ENCODE measurements at regions of chr10 and their contacts with region 1.

Region 1: GRCh38 chr10:80699602-80700039 is 161.9 kb downstream of the SH2D4B start:
- DNase-seq: peak; percentile 39
- ATAC-seq: peak; percentile 94
- H3K4me3 ChIP-seq: no peak overlapping the region
- H3K27ac ChIP-seq: no peak overlapping the region
- H3K4me1 ChIP-seq: no peaks in the 10 kb centered on the region
- H3K27me3 ChIP-seq: peaks cover 3% of the 10 kb centered on the region; the same call in 1 of the 2 replicates
- CTCF ChIP-seq: peak; percentile 96

Region 2: GRCh38 chr10:80589726-80590373 is 109.8 kb before region 1 on chr10:
- CTCF ChIA-PET with region 1: no interaction called
- POLR2A ChIA-PET with region 1: no interaction called
- in situ Hi-C with region 1: no loop called
- intact Hi-C with region 1: no loop called
- DNase-seq: no peak
- ATAC-seq: no peak
- H3K4me3 ChIP-seq: no peak overlapping the region
- H3K27ac ChIP-seq: no peak overlapping the region
- H3K4me1 ChIP-seq: no peaks in the 10 kb centered on the region
- H3K27me3 ChIP-seq: no peaks in the 10 kb centered on the region; the same call in 1 of the 2 replicates
- CTCF ChIP-seq: no peak

Region 3: DNA sequence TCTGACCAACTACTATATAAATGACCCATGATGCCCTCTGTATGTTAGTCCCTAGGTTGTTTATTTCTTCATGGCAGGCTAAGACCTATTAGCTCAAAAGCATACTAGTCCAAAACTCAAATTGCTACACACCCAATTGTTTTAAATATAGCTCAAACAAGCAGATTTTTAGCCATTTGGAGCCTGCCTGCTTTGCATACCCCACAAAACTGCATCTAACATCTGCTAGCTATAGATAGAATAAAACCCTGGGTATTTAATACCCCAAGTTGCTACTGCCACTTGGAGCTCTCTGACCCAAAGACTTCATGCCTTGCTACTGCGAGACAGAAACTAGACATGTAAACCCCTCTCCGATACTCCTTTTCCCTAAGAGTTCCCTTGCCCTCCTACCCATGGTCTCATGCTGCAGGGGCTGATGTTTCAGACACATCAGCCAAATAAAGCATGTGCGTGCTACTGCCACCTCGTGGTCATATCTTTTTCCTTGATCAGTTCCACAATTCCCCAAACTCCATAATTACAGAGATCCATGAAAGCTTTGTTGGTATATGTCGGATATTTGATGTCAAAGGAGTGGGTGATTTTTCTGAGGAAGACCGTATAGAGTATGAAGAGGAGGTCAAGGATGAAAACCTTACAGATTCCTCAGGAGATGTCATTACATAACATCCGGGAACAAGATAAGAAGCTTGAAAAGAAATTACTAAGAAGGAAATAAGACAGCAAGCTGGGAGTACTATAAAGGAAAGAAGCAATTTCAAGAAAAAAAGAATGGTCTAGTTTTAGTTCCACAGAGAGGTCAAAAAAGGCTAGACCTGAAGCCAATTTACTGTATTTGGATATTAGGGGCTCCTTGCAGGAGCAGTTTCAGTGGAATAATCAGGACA is 224.7 kb after region 1 on chr10:
- CTCF ChIA-PET with region 1: interaction called, 10 read pairs
- POLR2A ChIA-PET with region 1: no interaction called
- in situ Hi-C with region 1: no loop called
- intact Hi-C with region 1: loop called (anchors 1 kb)
- DNase-seq: no peak
- ATAC-seq: peak; percentile 76
- H3K4me3 ChIP-seq: no peak overlapping the region
- H3K27ac ChIP-seq: no peak overlapping the region
- H3K4me1 ChIP-seq: no peaks in the 10 kb centered on the region
- H3K27me3 ChIP-seq: no peaks in the 10 kb centered on the region
- CTCF ChIP-seq: peak; percentile 83

Region 4: GRCh38 chr10:81018708-81019365 is 319.2 kb after region 1 on chr10:
- CTCF ChIA-PET with region 1: no interaction called
- POLR2A ChIA-PET with region 1: no interaction called
- in situ Hi-C with region 1: no loop called
- intact Hi-C with region 1: loop called (anchors 2 kb)
- DNase-seq: peak; percentile 25
- ATAC-seq: peak; percentile 86
- H3K4me3 ChIP-seq: no peak overlapping the region
- H3K27ac ChIP-seq: no peak overlapping the region
- H3K4me1 ChIP-seq: no peaks in the 10 kb centered on the region
- H3K27me3 ChIP-seq: no peaks in the 10 kb centered on the region
- CTCF ChIP-seq: peak; percentile 87

Region 5: DNA sequence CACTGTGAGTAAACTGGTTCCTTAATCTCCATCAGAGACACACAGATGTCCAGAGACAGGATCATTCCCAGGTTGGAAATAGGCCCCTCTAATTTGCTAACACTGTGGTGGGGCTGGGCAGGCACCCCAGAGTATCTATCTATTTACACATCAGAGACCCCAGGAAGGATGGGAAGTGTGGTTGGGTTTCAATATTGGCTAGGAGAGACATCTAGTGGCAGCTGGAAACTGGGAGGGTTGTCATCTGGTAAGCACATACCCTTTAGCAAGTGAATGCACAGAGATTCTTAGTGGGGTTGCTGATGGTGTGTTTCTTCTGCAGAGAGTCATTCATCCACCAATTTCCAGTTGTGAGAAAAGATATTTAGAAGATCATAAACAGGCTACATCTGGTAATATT is 1139.3 kb after region 1 on chr10:
- CTCF ChIA-PET with region 1: no interaction called
- POLR2A ChIA-PET with region 1: no interaction called
- in situ Hi-C with region 1: no loop called
- intact Hi-C with region 1: loop called (anchors 10 kb)
- DNase-seq: no peak
- ATAC-seq: no peak
- H3K4me3 ChIP-seq: no peak overlapping the region
- H3K27ac ChIP-seq: no peak overlapping the region
- H3K4me1 ChIP-seq: no peaks in the 10 kb centered on the region
- H3K27me3 ChIP-seq: no peaks in the 10 kb centered on the region; the same call in 1 of the 2 replicates
- CTCF ChIP-seq: peak; percentile 64

Measured in Panc1 (cell line).